ENCODE measurements at regions of chr7 and their contacts with region 1.

Region 1: DNA sequence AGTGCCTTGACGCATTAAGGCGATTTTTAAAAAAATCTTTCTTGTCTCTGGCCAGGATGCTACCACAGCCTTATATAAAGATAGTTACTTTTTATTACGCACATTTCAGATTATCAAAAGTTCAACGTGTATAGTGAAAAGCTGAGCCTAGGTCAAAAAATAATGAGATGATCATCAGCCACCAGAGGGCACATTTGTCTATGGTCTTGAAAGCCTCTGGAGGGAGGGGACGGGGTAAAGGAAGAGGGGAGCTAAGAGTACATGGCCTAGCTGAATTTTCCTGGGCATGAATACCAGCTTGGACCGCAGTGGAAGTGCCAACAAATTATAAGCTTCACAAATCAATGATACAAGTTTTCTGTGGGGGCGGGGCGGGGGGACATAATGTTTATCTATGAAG is 285.9 kb upstream of the SMIM30 start:
- DNase-seq: no peak
- H3K4me3 ChIP-seq: no peak overlapping the region
- H3K27ac ChIP-seq: no peak overlapping the region
- H3K4me1 ChIP-seq: no peaks in the 10 kb centered on the region
- H3K27me3 ChIP-seq: no peaks in the 10 kb centered on the region
- CTCF ChIP-seq: peak; percentile 22 to 43

Region 2: GRCh38 chr7:113487925-113488731 is 83.9 kb after region 1 on chr7:
- CTCF ChIA-PET with region 1: no interaction called
- dilution Hi-C with region 1: no loop called
- in situ Hi-C with region 1: no loop called
- intact Hi-C with region 1: no loop called
- DNase-seq: no peak
- H3K4me3 ChIP-seq: no peak overlapping the region
- H3K27ac ChIP-seq: no peak overlapping the region
- H3K4me1 ChIP-seq: no peaks in the 10 kb centered on the region
- H3K27me3 ChIP-seq: no peaks in the 10 kb centered on the region
- CTCF ChIP-seq: no peak

Region 3: DNA sequence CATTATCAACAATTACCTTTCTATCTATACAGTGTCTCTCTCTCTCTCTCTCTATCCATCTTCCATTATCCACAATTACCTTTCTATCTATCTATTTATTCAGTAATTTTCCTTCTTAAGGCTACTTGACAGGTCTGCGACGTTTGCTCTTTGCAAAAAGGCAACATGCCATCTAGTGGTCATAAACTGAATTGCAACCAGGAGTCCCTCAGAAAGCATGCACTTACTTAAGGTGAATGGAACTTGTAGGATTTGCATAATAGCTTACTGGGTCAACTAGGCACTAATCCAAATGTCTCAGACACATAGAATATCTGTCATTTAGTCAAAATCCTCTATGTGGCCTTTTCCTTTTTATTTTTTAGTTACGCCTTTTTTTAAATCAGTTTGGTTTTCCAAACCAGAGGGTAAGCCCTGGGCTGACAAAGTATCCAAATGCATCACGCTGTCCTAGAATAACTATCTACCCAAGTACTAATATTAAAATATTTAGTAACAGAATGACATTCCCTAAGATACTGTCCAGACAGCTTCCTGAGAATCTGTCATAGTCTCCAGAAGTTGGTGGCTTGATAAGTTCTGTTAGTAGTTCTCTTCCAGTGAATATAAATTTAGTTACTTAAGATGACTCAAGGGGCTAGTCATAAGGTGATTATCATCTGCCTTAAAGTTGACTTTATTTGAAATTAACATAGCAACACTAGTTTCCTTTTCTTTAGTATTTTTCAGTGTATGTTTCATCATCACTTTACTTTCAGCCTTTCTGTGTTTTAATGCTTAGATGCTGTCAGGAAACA is 306.3 kb after region 1 on chr7:
- CTCF ChIA-PET with region 1: interaction called, 25 read pairs
- dilution Hi-C with region 1: no loop called
- in situ Hi-C with region 1: no loop called
- intact Hi-C with region 1: loop called (anchors 1 kb)
- DNase-seq: peak; percentile 72
- H3K4me3 ChIP-seq: no peak overlapping the region
- H3K27ac ChIP-seq: no peak overlapping the region
- H3K4me1 ChIP-seq: no peaks in the 10 kb centered on the region
- H3K27me3 ChIP-seq: no peaks in the 10 kb centered on the region
- CTCF ChIP-seq: peak; percentile 93 to 98

Measured in mammary epithelial cell (primary cell).